ENCODE measurements at regions of chr15 and their contacts with region 1.

Region 1: GRCh38 chr15:90265271-90266060 is at the start of gene NGRN:
- DNase-seq: peak; percentile 95
- H3K4me3 Mint-ChIP-seq: peak within 1 kb of the TSS; percentile 83
- H3K27ac Mint-ChIP-seq: peak within 1 kb of the TSS; percentile 96
- H3K4me1 Mint-ChIP-seq: peaks cover 34% of the 10 kb centered on the region
- H3K27me3 Mint-ChIP-seq: no peaks in the 10 kb centered on the region
- total RNA-seq, gene NGRN: 30.7 to 31.0 TPM

Region 2: GRCh38 chr15:89926158-89926557 is 339.3 kb before region 1 on chr15:
- CTCF ChIA-PET with region 1: no interaction called
- intact Hi-C with region 1: no loop called
- DNase-seq: no peak
- H3K4me3 Mint-ChIP-seq: no peak overlapping the region
- H3K27ac Mint-ChIP-seq: no peak overlapping the region
- H3K4me1 Mint-ChIP-seq: no peaks in the 10 kb centered on the region
- H3K27me3 Mint-ChIP-seq: no peaks in the 10 kb centered on the region

Region 3: DNA sequence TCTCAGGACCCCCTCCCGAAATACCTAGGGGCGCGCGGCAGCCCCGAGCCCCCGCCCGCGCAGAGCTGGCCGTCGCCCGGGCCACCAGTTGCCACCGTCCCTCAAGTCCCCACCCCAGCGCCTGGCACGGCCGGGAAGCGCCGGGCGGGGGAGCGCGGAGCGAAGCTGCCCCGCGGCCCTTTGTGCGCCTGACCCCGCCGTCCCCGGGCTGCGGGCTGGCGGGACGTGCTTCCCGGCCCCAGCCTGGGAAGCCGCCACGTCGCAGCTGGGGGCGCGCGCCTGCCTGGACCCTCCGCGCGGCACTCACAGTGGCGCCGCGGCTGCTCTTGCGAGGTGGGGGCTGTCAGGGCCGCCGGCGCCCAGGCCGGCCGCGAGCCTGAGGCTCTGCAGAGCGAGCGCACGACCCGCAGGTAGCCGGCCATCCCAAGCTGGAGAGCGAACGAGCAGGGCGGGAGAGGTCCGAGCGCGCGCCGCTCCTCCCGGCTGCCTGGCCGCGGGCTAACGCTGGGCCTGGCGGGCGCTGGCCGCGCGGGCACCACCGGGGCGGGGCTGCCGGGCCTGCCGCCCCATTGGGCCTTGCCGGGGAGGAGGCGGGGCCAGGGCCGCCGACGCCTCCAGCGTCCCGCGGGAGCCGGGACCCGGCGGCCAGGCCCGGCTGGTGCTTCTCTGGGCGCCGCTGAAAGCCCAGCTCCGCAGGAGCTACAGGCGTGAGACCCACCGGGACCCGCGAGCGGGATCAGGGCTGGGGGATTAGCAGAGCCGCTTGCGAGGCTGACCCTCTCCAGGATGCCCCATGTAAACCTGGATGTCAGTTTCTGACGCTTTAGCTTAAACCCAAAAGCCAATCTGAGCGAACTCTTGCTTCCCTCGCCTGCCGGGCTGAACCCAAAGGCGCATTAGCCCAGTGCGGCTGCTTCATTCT is 163.2 kb before region 1 on chr15 and contains the start of gene IDH2:
- CTCF ChIA-PET with region 1: no interaction called
- intact Hi-C with region 1: loop called (anchors 2 kb)
- DNase-seq: peak; percentile 64
- H3K4me3 Mint-ChIP-seq: peak within 1 kb of the TSS; percentile 91
- H3K27ac Mint-ChIP-seq: peak within 1 kb of the TSS; percentile 90
- H3K4me1 Mint-ChIP-seq: peaks cover 46% of the 10 kb centered on the region
- H3K27me3 Mint-ChIP-seq: no peaks in the 10 kb centered on the region
- total RNA-seq, gene IDH2: 225 to 229 TPM

Region 4: DNA sequence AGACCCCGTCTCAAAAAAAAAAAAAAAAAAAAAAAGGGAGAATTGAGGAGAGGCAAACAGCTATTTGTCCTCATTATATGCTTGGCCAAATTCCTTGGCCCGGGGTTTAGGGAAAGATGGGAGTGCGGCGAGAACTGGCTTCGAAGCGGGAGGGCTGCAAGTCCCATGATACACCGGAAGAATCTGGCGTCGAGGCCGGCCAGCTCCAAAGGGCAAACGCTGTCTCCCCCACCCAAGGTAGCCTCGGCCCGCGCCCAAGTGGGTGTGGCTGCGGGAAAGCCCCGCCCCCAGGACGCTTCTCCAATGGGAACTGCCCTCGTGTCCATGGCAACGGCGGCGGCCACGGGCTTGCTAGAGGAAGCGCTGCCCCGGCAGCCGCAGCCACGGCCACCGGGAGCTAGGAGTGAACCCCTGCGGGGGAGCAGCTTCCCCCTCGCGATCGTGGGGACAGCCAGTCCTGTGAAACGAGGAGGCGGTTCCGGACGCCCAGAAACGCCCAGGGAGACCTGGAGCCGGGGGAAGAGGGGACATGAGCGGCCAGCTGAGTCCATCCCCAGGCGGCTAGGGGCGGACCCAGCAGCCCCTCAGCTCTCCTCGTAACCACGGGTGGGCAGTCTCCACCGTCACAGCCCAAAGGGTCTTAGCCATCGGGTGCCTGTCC is 16.1 kb before region 1 on chr15 and contains the start of gene TTLL13:
- CTCF ChIA-PET with region 1: no interaction called
- intact Hi-C with region 1: loop called (anchors 2 kb)
- DNase-seq: peak; percentile 87
- H3K4me3 Mint-ChIP-seq: peak within 1 kb of the TSS; percentile 62
- H3K27ac Mint-ChIP-seq: peak within 1 kb of the TSS; percentile 5
- H3K4me1 Mint-ChIP-seq: peaks cover 13% of the 10 kb centered on the region
- H3K27me3 Mint-ChIP-seq: no peaks in the 10 kb centered on the region
- total RNA-seq, gene TTLL13: 0.15 to 0.26 TPM

Measured in activated naive CD4-positive, alpha-beta T cell treated with anti-CD3 and anti-CD28 coated beads for 36 hours (primary cell).